Mammary epithelial cell (primary cell): ENCODE measurements at regions of chr22 and their contacts with region 1.

Region 1: GRCh38 chr22:35539910-35540594 is 579 bp upstream of the RASD2 start:
- DNase-seq: peak; percentile 42
- H3K4me3 ChIP-seq: peak overlapping the region; percentile 52 to 59 (median 55)
- H3K27ac ChIP-seq: no peak overlapping the region
- H3K4me1 ChIP-seq: peaks cover 22% of the 10 kb centered on the region
- H3K27me3 ChIP-seq: peaks cover 6% of the 10 kb centered on the region
- CTCF ChIP-seq: no peak

Region 2: GRCh38 chr22:35443790-35444674 is 96.0 kb before region 1 on chr22:
- CTCF ChIA-PET with region 1: no interaction called
- dilution Hi-C with region 1: no loop called
- in situ Hi-C with region 1: no loop called
- intact Hi-C with region 1: loop called (anchors 5 kb)
- DNase-seq: no peak
- H3K4me3 ChIP-seq: no peak overlapping the region
- H3K27ac ChIP-seq: no peak overlapping the region
- H3K4me1 ChIP-seq: peaks cover 37% of the 10 kb centered on the region
- H3K27me3 ChIP-seq: no peaks in the 10 kb centered on the region
- CTCF ChIP-seq: no peak

Region 3: DNA sequence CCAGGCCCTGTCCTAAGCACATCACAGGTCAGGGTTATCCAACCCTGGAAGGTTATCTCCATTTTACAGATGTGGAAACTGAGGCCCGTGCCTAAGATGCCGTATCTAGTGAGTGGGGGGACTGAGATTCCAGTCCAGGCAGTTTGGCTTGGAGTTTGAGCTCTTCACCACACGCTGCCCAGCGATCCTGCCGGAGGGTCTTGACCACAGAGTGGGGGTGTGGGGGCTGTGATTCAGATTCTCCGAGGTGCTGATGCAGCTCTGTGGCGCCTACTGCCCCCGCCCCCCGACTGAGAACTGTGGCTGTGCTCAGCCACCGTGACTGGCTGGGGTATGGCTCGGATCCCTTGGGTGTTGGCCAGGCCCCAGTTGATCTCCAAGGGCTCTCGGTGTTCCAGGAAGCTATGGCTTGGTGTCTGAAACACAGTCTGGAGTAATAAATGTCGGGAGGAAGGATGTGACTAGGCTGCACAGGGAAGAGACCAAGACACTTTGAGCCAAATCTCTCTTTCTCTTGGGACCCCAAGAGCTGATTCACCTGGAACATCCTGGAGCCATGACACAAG is 60.0 kb before region 1 on chr22:
- CTCF ChIA-PET with region 1: no interaction called
- dilution Hi-C with region 1: no loop called
- in situ Hi-C with region 1: no loop called
- intact Hi-C with region 1: loop called (anchors 10 kb)
- DNase-seq: no peak
- H3K4me3 ChIP-seq: no peak overlapping the region
- H3K27ac ChIP-seq: no peak overlapping the region
- H3K4me1 ChIP-seq: no peaks in the 10 kb centered on the region
- H3K27me3 ChIP-seq: peaks cover 2% of the 10 kb centered on the region
- CTCF ChIP-seq: no peak

Region 4: GRCh38 chr22:35582861-35583670 is 43.0 kb after region 1 on chr22:
- CTCF ChIA-PET with region 1: no interaction called
- dilution Hi-C with region 1: loop called (anchors 10 kb)
- in situ Hi-C with region 1: no loop called
- intact Hi-C with region 1: no loop called
- DNase-seq: no peak
- H3K4me3 ChIP-seq: no peak overlapping the region
- H3K27ac ChIP-seq: no peak overlapping the region
- H3K4me1 ChIP-seq: peaks cover under 1% of the 10 kb centered on the region
- H3K27me3 ChIP-seq: no peaks in the 10 kb centered on the region
- CTCF ChIP-seq: peak; percentile 85 to 93

Region 5: GRCh38 chr22:36663561-36663960 is 1123.5 kb after region 1 on chr22:
- CTCF ChIA-PET with region 1: no interaction called
- dilution Hi-C with region 1: no loop called
- in situ Hi-C with region 1: no loop called
- intact Hi-C with region 1: no loop called
- DNase-seq: no peak
- H3K4me3 ChIP-seq: no peak overlapping the region
- H3K27ac ChIP-seq: no peak overlapping the region
- H3K4me1 ChIP-seq: peaks cover 22% of the 10 kb centered on the region
- H3K27me3 ChIP-seq: no peaks in the 10 kb centered on the region
- CTCF ChIP-seq: no peak